Activated T-helper 1 cell treated with anti-CD3 and anti-CD28 coated beads, Interleukin-12 subunit alpha, Interleukin-12 subunit beta, Interleukin-2, Interleukin-4 antibody, amounts not matched to agents 30 ng/mL and 10 ng/mL and 1 ng/mL, durations not matched to agents 14 hours and 24 hours and 36 hours (primary cell): ENCODE measurements at regions of chr15 and their contacts with region 1.

Region 1: DNA sequence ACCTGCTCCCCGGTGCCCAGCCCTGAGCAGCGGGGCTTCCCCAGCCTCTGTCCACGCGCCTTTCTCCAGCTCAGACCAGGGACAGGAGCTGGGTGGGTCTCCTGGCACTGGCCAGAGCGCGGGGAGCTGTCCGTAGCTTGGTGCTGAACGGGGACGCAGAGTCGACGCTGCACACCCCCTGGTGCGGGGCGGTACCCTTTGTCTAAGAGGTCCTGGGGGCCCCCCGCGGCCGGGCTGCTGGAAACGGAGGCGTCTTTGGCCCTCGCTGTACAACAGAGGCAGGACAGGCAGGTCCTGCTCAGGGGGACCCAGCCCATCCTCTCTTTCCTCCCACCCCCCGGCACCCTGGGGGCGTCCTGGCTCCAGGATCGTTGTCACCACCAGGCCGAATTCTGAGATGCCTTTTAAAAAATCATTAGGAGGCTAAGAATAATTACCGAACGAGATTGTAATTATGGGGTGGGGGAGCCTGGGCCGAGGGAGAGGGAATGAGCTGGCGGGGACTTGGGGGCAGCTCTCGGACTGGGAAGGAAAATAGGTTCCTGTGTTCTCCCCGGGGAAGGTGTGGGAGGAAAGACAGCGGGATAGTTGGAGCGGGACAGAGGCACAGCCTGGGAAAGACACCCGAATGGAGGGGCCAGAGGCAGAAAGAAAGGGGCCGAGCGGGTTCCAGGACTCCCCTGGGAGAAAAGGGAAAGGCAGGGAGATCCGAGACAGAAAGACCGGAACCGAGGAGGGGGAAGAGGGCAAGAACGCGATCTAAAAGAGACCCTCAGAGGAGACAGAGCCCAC is 4.1 kb upstream of the SKOR1 start:
- DNase-seq: no peak
- H3K4me3 Mint-ChIP-seq: no peak overlapping the region
- H3K27ac Mint-ChIP-seq: peak overlapping the region; percentile 79
- H3K4me1 Mint-ChIP-seq: peaks cover 17% of the 10 kb centered on the region
- H3K27me3 Mint-ChIP-seq: peaks cover 79% of the 10 kb centered on the region

Region 2: DNA sequence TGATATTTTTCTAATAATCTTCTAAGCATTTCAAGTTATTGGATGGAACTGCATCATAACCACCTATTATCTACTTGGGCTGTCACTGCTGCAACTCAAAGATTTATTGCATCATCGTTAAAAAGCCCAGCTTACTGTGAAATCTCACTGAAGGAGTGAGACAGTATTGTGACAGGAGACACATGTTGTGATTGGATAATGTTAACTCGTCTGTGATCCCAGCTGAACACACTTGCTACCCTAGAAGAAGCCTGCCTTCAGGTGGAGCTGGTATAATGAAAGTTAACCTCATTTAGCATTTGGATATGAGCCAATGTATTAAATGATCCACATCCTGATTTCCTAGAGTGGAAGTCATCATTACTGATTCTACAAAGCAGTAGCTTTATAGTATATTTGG is 140.5 kb before region 1 on chr15:
- intact Hi-C with region 1: loop called (anchors 5 kb)
- DNase-seq: no peak
- H3K4me3 Mint-ChIP-seq: no peak overlapping the region
- H3K27ac Mint-ChIP-seq: no peak overlapping the region
- H3K4me1 Mint-ChIP-seq: no peaks in the 10 kb centered on the region
- H3K27me3 Mint-ChIP-seq: no peaks in the 10 kb centered on the region

Region 3: DNA sequence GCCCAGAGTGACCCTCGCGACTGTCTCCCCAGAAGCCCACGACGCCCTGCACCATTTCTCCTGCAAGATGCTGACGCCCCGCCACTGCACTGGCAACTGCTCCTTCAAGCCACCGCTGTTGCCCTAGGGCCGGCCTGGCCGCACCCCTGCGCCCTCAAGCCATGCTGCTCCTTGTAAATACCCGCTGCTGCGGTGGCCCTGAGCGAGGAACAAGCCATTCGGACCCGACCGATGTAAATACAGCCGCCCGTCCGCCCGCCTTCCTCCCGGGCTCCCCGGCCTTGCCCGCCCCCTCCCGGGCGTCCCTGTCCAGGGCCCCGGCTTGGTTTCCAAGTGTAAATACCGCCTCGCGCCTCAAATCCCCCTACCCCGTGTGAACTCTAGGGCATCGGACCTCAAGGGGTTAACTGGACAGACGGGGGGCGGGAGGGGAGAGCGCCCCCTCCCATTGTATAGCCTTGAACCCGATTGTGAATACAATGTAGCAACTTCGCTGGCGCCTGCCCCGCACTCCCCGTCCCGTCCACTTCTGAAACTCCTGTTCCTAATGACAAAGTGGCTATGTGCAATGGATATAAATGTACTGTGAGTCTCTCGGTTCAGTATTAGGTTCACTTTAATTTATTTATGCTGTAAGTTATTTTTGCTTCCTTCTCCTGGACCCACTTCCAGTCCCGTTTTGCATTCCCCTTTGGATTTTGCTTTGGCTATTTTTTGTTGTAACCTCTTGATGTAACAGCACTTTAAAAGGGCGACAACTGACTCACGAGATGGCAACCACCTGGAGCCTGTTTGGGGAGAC is 12.7 kb after region 1 on chr15:
- intact Hi-C with region 1: loop called (anchors 1 kb)
- DNase-seq: no peak
- H3K4me3 Mint-ChIP-seq: peak overlapping the region; percentile 76
- H3K27ac Mint-ChIP-seq: peak overlapping the region; percentile 48
- H3K4me1 Mint-ChIP-seq: peaks cover 25% of the 10 kb centered on the region
- H3K27me3 Mint-ChIP-seq: peaks cover 76% of the 10 kb centered on the region

Region 4: DNA sequence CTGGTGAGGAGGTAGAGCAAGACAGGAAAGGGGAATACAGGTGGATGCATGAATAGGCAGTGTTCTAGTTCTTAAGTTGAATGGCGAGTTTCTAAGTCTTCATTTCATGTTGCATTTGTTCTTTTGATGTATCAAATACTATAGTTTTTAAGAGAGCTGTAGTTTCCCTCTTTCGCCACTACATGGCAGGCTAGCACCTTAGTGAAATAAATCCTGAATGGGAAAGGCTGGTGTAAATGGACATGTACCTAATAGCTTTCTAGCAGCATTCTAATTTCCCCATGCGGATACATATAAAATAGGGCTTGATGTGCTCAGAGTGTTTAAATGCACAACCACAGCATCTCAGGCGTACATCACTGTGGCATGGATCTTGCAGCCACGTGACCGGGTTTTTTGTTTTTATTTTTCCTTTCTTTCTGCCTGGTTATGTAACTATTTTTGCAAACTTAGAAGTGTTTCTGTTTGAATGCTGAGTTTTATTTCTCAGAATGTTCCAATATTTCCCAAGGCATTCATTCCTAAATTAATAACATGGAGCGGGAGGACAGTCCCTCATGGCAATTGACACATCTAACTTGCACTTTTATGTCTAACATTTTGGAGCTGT is 431.8 kb after region 1 on chr15:
- intact Hi-C with region 1: no loop called
- DNase-seq: no peak
- H3K4me3 Mint-ChIP-seq: no peak overlapping the region
- H3K27ac Mint-ChIP-seq: no peak overlapping the region
- H3K4me1 Mint-ChIP-seq: no peaks in the 10 kb centered on the region
- H3K27me3 Mint-ChIP-seq: peaks cover 19% of the 10 kb centered on the region